PC-9 (cell line): ENCODE measurements at regions of chr14 and their contacts with region 1.

Region 1: GRCh38 chr14:102139248-102140026 is at the start of gene WDR20:
- DNase-seq: peak; percentile 98 to 100
- H3K4me3 ChIP-seq: peak within 1 kb of the TSS; percentile 75
- H3K27ac ChIP-seq: peak within 1 kb of the TSS; percentile 44
- H3K4me1 ChIP-seq: peaks cover 31% of the 10 kb centered on the region
- H3K27me3 ChIP-seq: no peaks in the 10 kb centered on the region
- CTCF ChIP-seq: peak; percentile 19; the same call in 1 of the 2 replicates
- total RNA-seq, gene WDR20: 62.2 and 93.5 TPM in 2 replicates

Region 2: DNA sequence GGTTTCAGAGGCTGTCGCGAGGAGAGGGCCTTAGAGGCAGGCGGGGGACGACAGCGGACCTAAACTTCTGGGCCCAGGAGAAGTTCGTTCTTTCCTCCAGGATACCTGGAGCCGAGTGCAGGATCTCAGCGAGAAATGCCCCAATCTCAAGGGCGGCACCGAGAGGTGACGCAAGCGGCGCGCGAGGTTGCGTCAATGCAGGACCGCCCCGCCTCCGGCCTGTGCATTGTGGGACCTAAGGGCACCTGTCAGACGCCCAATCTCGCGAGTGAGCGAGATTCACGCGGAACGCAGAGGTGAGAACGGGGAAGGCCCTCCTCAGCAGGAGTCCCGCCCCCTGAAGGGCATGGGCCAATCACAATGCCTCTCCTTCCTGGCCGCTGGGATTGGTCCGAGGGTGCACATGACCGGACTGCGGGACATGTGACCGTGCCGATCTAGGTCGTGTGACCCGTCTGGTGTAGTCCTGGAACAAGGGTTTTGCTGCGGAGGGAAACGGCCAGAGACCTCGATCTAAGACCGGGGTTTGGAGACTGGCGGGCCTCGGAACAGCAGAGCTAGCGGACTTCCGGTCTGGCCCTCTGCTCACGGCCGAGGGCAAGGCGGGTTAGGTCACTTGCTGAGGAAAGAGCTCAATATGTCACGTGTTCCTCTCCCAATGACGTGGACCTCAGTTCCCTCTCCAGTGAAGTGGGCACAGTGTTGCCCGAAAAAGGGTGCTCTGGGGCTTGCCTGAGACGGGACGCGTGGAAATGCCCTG is 191.4 kb before region 1 on chr14:
- CTCF ChIA-PET with region 1: no interaction called
- POLR2A ChIA-PET with region 1: no interaction called
- intact Hi-C with region 1: loop called (anchors 1 kb)
- DNase-seq: peak; percentile 100
- H3K4me3 ChIP-seq: peak overlapping the region; percentile 83
- H3K27ac ChIP-seq: peak overlapping the region; percentile 93
- H3K4me1 ChIP-seq: peaks cover 20% of the 10 kb centered on the region
- H3K27me3 ChIP-seq: no peaks in the 10 kb centered on the region
- CTCF ChIP-seq: no peak

Region 3: DNA sequence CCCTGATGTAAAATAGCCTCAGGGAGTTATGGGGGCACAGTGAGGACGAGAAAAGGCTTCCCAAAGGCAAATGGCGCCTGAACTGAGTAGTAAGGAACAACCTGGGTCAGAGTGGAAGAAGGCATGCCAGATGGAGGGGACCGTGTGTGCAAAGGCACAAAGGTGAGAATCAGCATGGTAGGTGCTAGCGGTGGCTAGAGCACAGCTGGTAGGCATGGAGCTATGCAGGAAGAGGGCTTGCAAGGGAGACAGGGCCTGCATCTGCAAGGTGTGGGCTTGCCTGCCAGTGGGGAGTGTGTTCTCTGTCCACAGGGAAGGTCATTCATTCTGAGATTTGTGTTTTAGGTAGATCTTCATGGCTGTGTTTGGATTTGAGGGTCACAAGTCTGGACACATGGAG is 34.1 kb before region 1 on chr14:
- CTCF ChIA-PET with region 1: no interaction called
- POLR2A ChIA-PET with region 1: no interaction called
- intact Hi-C with region 1: no loop called
- DNase-seq: no peak
- H3K4me3 ChIP-seq: no peak overlapping the region
- H3K27ac ChIP-seq: no peak overlapping the region
- H3K4me1 ChIP-seq: no peaks in the 10 kb centered on the region
- H3K27me3 ChIP-seq: no peaks in the 10 kb centered on the region
- CTCF ChIP-seq: no peak

Region 4: DNA sequence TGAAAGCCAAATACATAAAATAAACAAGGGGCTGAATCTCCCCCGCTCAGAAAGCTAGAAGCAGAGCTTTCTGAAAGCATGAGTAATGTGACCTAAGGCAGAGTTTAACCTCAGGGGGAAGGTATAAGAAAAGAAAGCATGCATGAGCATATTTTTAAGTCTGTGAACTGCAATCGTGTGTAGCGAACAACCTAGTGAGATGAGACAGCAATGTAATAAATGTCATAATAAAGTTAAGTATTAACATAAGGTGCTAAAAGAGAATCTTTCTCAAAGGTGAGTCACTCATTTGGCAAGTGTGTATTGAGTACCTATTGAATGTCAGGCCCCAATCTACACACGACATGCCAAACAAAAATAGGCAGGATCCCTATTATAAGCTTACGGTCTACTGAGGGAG is 13.9 kb before region 1 on chr14:
- CTCF ChIA-PET with region 1: interaction called, 3 read pairs
- POLR2A ChIA-PET with region 1: interaction called, 13 read pairs
- intact Hi-C with region 1: no loop called
- DNase-seq: peak; percentile 25 to 97
- H3K4me3 ChIP-seq: peak overlapping the region; percentile 14
- H3K27ac ChIP-seq: peak overlapping the region; percentile 72
- H3K4me1 ChIP-seq: peaks cover 36% of the 10 kb centered on the region
- H3K27me3 ChIP-seq: no peaks in the 10 kb centered on the region
- CTCF ChIP-seq: no peak

Region 5: DNA sequence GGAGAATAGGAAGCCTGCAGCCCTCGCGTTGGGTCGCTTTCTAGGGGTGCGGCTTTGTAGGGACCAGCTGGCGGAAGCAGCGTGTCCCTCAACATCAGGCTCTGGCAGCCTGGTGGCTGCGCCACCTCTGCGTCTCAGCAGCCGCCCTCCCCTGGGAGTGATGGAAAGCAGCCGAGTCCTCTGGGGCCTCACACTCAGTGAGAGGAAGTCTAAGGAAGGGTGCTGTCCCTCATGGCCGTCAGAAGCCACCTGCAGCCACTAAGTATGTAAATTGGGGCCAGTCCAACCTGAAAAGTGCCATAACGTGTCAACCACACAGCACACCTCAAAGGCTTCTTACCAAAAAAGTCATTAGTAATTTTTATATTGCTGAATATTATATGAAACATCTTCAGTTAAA is 80.6 kb after region 1 on chr14:
- CTCF ChIA-PET with region 1: no interaction called
- POLR2A ChIA-PET with region 1: no interaction called
- intact Hi-C with region 1: loop called (anchors 2 kb)
- DNase-seq: no peak
- H3K4me3 ChIP-seq: no peak overlapping the region
- H3K27ac ChIP-seq: no peak overlapping the region
- H3K4me1 ChIP-seq: peaks cover 19% of the 10 kb centered on the region
- H3K27me3 ChIP-seq: no peaks in the 10 kb centered on the region
- CTCF ChIP-seq: no peak

Region 6: DNA sequence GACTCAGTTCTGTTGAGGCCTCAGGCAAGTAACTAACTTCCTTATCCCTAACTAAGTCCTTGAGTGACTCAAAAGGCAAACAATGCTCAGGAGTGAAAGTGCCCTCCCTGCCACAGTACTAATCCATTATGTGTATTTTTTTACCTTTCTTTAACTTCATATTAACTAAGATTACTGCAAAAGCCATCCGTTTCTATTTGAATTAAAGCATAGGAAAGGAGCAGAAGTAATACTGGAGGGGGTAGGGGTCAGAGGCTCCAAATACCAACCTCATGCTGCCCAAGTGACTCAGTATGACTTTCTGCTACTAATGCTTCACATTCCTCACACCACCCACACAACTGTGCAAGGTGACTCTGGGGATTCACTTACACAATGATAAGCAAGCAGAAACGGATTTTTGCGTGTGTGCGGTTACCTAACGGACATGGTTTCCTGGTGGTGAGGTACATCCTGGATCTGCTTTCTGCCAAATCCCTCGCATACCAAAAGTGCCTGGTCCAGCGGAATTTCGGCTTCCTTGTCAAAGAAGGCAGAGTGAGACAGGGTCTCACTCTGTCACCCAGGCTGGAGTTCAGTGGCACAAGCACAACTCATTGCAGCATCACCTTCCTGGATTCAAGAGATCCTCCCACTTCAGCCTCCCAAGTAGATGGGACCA is 140.4 kb after region 1 on chr14:
- CTCF ChIA-PET with region 1: no interaction called
- POLR2A ChIA-PET with region 1: interaction called, 11 read pairs
- intact Hi-C with region 1: no loop called
- DNase-seq: peak; percentile 94 to 100
- H3K4me3 ChIP-seq: peak overlapping the region; percentile 26; the same call in 1 of the 2 replicates
- H3K27ac ChIP-seq: peak overlapping the region; percentile 95
- H3K4me1 ChIP-seq: peaks cover 82% of the 10 kb centered on the region
- H3K27me3 ChIP-seq: no peaks in the 10 kb centered on the region
- CTCF ChIP-seq: no peak